ENCODE measurements at regions of chr17 and their contacts with region 1.

Region 1: DNA sequence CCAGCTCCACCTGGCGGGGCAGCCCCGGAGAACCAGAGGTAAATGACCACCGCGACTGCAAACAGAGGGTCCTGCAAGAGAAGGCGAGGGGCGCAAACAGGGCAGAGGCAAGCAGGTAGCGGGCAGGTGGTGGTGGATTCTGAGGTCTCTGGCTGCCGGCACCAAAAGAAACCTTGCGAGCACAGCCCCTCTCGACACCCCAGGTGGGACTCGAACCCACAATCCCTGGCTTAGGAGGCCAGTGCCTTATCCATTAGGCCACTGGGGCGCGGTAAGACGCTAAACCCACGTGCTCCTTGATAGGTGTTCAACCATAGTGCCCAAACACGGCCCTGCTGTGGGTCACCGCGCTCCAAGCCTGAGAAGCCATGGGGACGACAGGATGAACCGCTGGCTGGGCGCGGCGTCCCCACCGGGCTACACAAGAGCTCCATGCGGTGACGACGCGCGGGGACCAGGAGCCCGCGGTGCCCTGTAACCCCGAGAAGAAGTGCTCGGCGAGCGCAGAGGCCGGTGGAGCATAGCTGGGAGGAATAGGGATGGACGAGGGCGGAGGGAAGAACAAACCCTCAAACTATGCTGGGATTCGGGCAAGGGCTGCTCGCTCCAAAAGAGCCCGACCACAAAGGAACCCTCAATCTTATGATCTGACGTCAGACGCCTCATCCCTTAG is 12.4 kb downstream of the ATP5PD start:
- DNase-seq: peak; percentile 65 to 72 (median 66)
- H3K4me3 ChIP-seq: peak overlapping the region; percentile 45 to 82 (median 52)
- H3K4me3 Mint-ChIP-seq: peak overlapping the region; percentile 94 to 95
- H3K27ac ChIP-seq: no peak overlapping the region
- H3K27ac Mint-ChIP-seq: peak overlapping the region; percentile 42 to 82 (median 68)
- H3K4me1 ChIP-seq: peaks cover 42 to 55% of the 10 kb centered on the region in 2 donors
- H3K4me1 Mint-ChIP-seq: peaks cover 50% of the 10 kb centered on the region
- H3K27me3 ChIP-seq: peaks cover 5 to 22% of the 10 kb centered on the region in 2 donors
- H3K27me3 Mint-ChIP-seq: peaks cover 30 to 41% (median 36%) of the 10 kb centered on the region in 3 donors
- CTCF ChIP-seq: no peak

Region 2: DNA sequence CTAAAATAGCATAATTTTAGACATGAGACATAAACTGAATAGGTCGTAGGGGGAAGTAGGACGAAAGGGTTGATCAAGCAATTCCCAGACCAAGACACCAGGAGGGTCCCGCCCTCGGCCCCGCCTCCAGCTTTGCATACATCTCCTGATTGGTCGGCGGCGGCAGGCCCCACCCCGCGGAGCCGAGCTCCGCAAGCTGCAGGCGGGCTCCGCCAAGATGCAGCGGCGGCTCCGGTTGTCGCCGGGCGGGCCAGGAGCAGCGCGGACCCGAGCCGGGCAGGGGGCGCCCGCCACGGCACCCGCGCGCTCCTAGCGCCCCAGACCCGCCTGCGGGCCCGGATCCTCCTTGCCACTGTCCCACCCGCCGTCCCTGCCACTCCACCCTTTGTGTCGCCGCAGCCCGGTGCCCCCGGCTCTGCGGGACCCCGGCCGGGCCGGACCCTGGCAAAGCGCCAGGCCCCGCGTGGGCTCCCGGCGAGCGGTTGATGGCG is 46.9 kb before region 1 on chr17 and contains the start of gene CDR2L:
- intact Hi-C with region 1: loop called in 1 of 2 experiments (anchors 10 kb)
- DNase-seq: peak; percentile 91 to 95 (median 92)
- H3K4me3 ChIP-seq: peak within 1 kb of the TSS; percentile 37 to 79 (median 41)
- H3K4me3 Mint-ChIP-seq: peak within 1 kb of the TSS; percentile 81 to 88
- H3K27ac ChIP-seq: peak within 1 kb of the TSS in 1 of 2 donors; percentile 35
- H3K27ac Mint-ChIP-seq: peak within 1 kb of the TSS; percentile 35 to 90 (median 78)
- H3K4me1 ChIP-seq: peaks cover 30 to 36% of the 10 kb centered on the region in 2 donors
- H3K4me1 Mint-ChIP-seq: peaks cover 34% of the 10 kb centered on the region
- H3K27me3 ChIP-seq: peaks cover 17 to 48% of the 10 kb centered on the region in 2 donors
- H3K27me3 Mint-ChIP-seq: peaks cover 44 to 56% (median 50%) of the 10 kb centered on the region in 3 donors
- CTCF ChIP-seq: no peak
- polyA plus RNA-seq, gene CDR2L: 0.05 TPM in 1 of 3 donors, not detected in the others